AG04449 (cell line): ENCODE measurements at regions of chr14 and their contacts with region 1.

Region 1: GRCh38 chr14:22570132-22570949 is 18.7 kb downstream of the DAD1 start:
- DNase-seq: no peak
- H3K4me3 ChIP-seq: no peak overlapping the region
- CTCF ChIP-seq: peak; percentile 37

Region 2: DNA sequence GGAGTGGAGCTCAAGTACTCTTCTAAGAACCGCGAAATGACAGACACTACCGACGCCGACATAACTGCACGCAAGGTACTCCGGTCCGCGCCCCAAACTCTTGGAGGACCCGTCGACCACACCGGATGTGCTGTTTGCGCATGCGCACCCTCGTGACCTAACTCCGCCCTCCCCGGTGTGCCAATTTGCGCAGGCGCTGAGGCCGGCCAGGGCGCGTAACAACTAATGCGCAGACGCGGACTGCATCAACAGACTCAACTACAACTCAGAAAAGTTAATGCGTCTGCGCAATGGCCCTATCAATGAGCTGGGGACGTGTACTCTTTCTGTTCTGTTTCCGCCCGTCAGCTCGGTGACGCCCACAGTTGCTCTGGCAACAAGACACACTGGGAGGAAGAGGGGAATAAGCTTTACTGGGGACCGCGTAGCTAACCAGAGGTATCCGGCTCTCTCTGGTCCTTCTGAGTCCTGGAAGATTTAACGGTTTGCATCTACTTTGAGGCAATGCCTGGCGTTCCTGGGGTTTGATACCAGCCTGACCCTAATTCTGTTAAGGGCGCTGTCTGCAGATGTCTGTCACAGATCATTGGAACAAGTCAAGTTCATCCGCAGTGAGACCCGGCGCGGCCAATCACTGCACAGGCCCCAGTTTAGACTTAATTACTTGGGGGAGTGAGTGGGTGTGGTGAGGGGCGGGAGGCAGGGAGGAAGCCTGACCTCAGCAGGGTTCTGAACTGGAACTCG is 18.9 kb after region 1 on chr14 and contains the start of gene DAD1:
- CTCF ChIA-PET with region 1: interaction called, 141 read pairs
- POLR2A ChIA-PET with region 1: interaction called, 3 read pairs
- DNase-seq: peak; percentile 97
- H3K4me3 ChIP-seq: peak within 1 kb of the TSS; percentile 89
- CTCF ChIP-seq: no peak

Region 3: GRCh38 chr14:22614224-22614799 is 44.0 kb after region 1 on chr14:
- CTCF ChIA-PET with region 1: interaction called, 12 read pairs
- POLR2A ChIA-PET with region 1: interaction called, 3 read pairs
- DNase-seq: peak; percentile 99
- H3K4me3 ChIP-seq: no peak overlapping the region
- CTCF ChIP-seq: no peak

Region 4: GRCh38 chr14:22689186-22689585 is 118.8 kb after region 1 on chr14:
- CTCF ChIA-PET with region 1: interaction called, 10 read pairs
- POLR2A ChIA-PET with region 1: no interaction called
- DNase-seq: peak; percentile 92
- H3K4me3 ChIP-seq: no peak overlapping the region
- CTCF ChIP-seq: no peak

Region 5: GRCh38 chr14:22781586-22781991 is 211.2 kb after region 1 on chr14:
- CTCF ChIA-PET with region 1: interaction called, 11 read pairs
- POLR2A ChIA-PET with region 1: no interaction called
- DNase-seq: no peak
- H3K4me3 ChIP-seq: no peak overlapping the region
- CTCF ChIP-seq: no peak

Region 6: DNA sequence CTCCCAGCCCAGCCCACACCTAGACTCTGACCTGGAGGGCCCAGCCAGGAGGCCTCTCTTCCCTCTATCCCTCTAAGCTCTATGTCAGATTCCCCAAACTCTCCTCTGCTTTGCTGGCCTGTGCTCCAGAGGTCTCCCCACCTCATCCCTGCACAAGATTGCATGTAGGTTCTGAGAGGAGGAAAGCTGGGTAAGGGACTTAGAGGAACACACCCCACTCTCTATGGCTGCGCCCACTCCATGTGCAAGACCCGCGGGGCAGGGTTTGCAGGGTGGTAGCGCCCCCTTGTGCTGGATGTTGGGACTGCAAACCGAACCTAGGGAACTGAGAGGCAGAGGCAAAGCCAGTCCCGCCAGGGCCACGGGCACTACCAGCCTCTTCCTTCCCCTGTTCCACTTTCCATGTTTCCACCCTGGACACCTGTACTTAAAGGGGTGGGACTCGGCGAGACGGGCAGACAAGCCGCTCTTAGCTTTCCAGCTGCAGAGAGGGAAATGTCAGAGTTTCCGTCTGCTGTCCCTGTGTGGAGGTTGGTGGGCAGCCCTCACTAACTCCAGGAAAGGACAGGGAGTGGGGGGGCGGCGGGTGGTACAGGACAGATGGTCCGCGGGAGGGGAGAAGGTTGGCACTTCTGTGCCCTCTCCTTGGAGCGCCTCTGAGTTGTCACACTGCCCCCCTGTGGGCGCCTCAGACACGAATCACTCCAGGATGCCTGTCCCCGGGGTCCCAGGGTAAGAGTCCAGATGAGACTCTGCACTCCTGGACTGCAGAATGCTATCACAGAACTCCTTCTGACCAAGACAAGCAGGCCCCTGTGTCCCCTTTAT is 282.8 kb after region 1 on chr14:
- CTCF ChIA-PET with region 1: interaction called, 122 read pairs
- POLR2A ChIA-PET with region 1: interaction called, 9 read pairs
- DNase-seq: no peak
- H3K4me3 ChIP-seq: peak overlapping the region; percentile 59
- CTCF ChIP-seq: peak; percentile 93